B cell (primary cell): ENCODE measurements at regions of chrX and their contacts with region 1.

Region 1: DNA sequence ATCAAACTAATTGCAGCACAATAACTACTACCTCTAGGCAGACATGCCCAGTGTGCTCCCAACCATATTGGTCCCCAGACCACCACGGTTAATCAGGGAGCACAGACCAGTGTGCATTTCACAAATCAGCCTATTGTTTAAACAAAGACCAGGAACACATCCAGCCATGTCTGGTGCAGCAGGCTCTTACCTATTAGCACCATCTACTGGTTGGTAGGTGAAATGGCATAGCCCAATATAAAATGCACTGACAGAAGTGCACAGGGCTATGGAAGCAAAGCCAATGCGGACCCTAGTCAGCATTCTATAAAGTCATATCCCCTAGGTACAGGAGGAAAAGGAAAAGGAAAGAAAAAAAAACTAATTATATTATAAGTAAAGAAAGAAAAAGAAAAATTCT is 15.5 kb upstream of the CYLC1 start:
- DNase-seq: peak; percentile 11
- ATAC-seq: no peak
- H3K4me3 ChIP-seq: no peak overlapping the region
- H3K4me3 Mint-ChIP-seq: no peak overlapping the region
- H3K27ac ChIP-seq: no peak overlapping the region
- H3K27ac Mint-ChIP-seq: no peak overlapping the region
- H3K4me1 ChIP-seq: no peaks in the 10 kb centered on the region
- H3K4me1 Mint-ChIP-seq: no peaks in the 10 kb centered on the region
- H3K27me3 ChIP-seq: no peaks in the 10 kb centered on the region
- H3K27me3 Mint-ChIP-seq: no peaks in the 10 kb centered on the region
- CTCF ChIP-seq: peak; percentile 68

Region 2: GRCh38 chrX:83008415-83008814 is 837.0 kb before region 1 on chrX:
- CTCF ChIA-PET with region 1: interaction called, 3 read pairs
- POLR2A ChIA-PET with region 1: no interaction called
- intact Hi-C with region 1: loop called (anchors 10 kb)
- DNase-seq: peak; percentile 4
- ATAC-seq: no peak
- H3K4me3 ChIP-seq: no peak overlapping the region
- H3K4me3 Mint-ChIP-seq: no peak overlapping the region
- H3K27ac ChIP-seq: no peak overlapping the region
- H3K27ac Mint-ChIP-seq: no peak overlapping the region
- H3K4me1 ChIP-seq: no peaks in the 10 kb centered on the region
- H3K4me1 Mint-ChIP-seq: no peaks in the 10 kb centered on the region
- H3K27me3 ChIP-seq: no peaks in the 10 kb centered on the region
- H3K27me3 Mint-ChIP-seq: no peaks in the 10 kb centered on the region
- CTCF ChIP-seq: peak; percentile 44

Region 3: DNA sequence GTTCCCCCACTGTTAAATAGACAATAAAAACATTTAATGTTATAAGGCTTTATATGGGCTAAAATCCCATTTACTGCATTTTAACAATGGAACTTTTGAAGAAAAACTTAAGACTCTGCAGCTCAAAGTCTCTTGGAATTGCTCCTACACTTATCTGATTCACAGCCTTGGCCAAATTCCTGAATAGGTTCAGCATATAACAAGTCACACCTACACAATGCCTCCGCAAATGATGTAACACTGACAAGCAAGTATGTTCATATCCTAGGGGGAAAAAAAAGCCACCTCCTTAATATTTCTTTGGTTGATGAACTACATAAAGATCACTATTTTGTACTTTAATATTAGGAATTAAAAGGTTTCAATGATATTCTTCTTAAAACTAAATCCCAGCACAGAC is 308.1 kb after region 1 on chrX:
- CTCF ChIA-PET with region 1: no interaction called
- POLR2A ChIA-PET with region 1: no interaction called
- intact Hi-C with region 1: no loop called
- DNase-seq: no peak
- ATAC-seq: no peak
- H3K4me3 ChIP-seq: no peak overlapping the region
- H3K4me3 Mint-ChIP-seq: no peak overlapping the region
- H3K27ac ChIP-seq: no peak overlapping the region
- H3K27ac Mint-ChIP-seq: no peak overlapping the region
- H3K4me1 ChIP-seq: no peaks in the 10 kb centered on the region
- H3K4me1 Mint-ChIP-seq: no peaks in the 10 kb centered on the region
- H3K27me3 ChIP-seq: no peaks in the 10 kb centered on the region
- H3K27me3 Mint-ChIP-seq: no peaks in the 10 kb centered on the region
- CTCF ChIP-seq: no peak